ENCODE measurements at regions of chr13 and their contacts with region 1.

Region 1: GRCh38 chr13:21014502-21015170 is 46.8 kb downstream of the LATS2 start:
- DNase-seq: peak; percentile 91
- ATAC-seq: peak; percentile 63
- H3K4me3 ChIP-seq: no peak overlapping the region
- H3K27ac ChIP-seq: peak overlapping the region; percentile 98
- H3K4me1 ChIP-seq: peaks cover 44% of the 10 kb centered on the region
- H3K27me3 ChIP-seq: no peaks in the 10 kb centered on the region
- CTCF ChIP-seq: no peak
- POLR2A ChIP-seq: no peak; the same call in 1 of the 2 replicates
- RAD21 ChIP-seq: 0 out of 2 replicates have a peak, but pooled peaks have one; percentile 1

Region 2: GRCh38 chr13:20997430-20998161 is 17.0 kb before region 1 on chr13:
- CTCF ChIA-PET with region 1: interaction called, 6 read pairs
- POLR2A ChIA-PET with region 1: no interaction called
- dilution Hi-C with region 1: no loop called
- in situ Hi-C with region 1: no loop called
- intact Hi-C with region 1: loop called (anchors 2 kb)
- DNase-seq: peak; percentile 98
- ATAC-seq: peak; percentile 87
- H3K4me3 ChIP-seq: no peak overlapping the region
- H3K27ac ChIP-seq: peak overlapping the region; percentile 92
- H3K4me1 ChIP-seq: peaks cover 24% of the 10 kb centered on the region
- H3K27me3 ChIP-seq: no peaks in the 10 kb centered on the region
- CTCF ChIP-seq: no peak
- POLR2A ChIP-seq: no peak
- RAD21 ChIP-seq: peak; percentile 22; the same call in 1 of the 2 replicates

Region 3: GRCh38 chr13:21043898-21044297 is 29.3 kb after region 1 on chr13:
- CTCF ChIA-PET with region 1: no interaction called
- POLR2A ChIA-PET with region 1: no interaction called
- dilution Hi-C with region 1: no loop called
- in situ Hi-C with region 1: no loop called
- intact Hi-C with region 1: loop called (anchors 2 kb)
- DNase-seq: peak; percentile 96
- ATAC-seq: peak; percentile 91
- H3K4me3 ChIP-seq: no peak overlapping the region
- H3K27ac ChIP-seq: peak overlapping the region; percentile 12; the same call in 1 of the 2 replicates
- H3K4me1 ChIP-seq: peaks cover 38% of the 10 kb centered on the region
- H3K27me3 ChIP-seq: no peaks in the 10 kb centered on the region
- CTCF ChIP-seq: no peak
- POLR2A ChIP-seq: no peak
- RAD21 ChIP-seq: no peak; the same call in 1 of the 2 replicates

Region 4: GRCh38 chr13:21075011-21075898 is 60.6 kb after region 1 on chr13:
- CTCF ChIA-PET with region 1: no interaction called
- POLR2A ChIA-PET with region 1: no interaction called
- dilution Hi-C with region 1: no loop called
- in situ Hi-C with region 1: loop called (anchors 10 kb)
- intact Hi-C with region 1: no loop called
- DNase-seq: no peak
- ATAC-seq: peak; percentile 6; the same call in 1 of the 2 replicates
- H3K4me3 ChIP-seq: no peak overlapping the region
- H3K27ac ChIP-seq: no peak overlapping the region
- H3K4me1 ChIP-seq: peaks cover 21% of the 10 kb centered on the region
- H3K27me3 ChIP-seq: no peaks in the 10 kb centered on the region
- CTCF ChIP-seq: no peak
- POLR2A ChIP-seq: no peak
- RAD21 ChIP-seq: no peak